ENCODE measurements at regions of chr10 and their contacts with region 1.

Region 1: DNA sequence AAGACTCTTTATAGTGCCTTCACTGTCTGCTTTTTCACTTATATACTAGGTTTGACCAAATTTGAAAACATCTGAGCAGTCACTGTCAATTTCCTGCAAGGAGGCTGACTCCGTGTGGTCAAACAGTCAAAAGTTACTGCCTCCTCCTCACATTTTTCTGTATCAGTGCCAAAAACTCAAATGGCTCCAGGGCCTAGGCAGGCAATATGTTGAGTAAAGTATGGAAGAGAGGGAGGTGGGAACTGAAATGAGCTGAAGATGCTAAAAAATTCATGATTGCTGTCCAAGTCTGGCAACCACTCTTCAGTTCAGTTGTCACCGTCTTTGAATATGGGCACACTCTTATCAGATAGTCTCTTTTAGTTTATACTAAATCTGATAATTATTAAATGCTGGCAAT is 551.6 kb downstream of the CCSER2 start:
- DNase-seq: no peak
- H3K4me3 ChIP-seq: no peak overlapping the region
- H3K27ac ChIP-seq: no peak overlapping the region
- H3K4me1 ChIP-seq: no peaks in the 10 kb centered on the region
- H3K27me3 ChIP-seq: no peaks in the 10 kb centered on the region
- CTCF ChIP-seq: no peak
- POLR2A ChIP-seq: no peak

Region 2: GRCh38 chr10:84743483-84743882 is 136.5 kb before region 1 on chr10:
- intact Hi-C with region 1: no loop called
- DNase-seq: no peak
- H3K4me3 ChIP-seq: no peak overlapping the region
- H3K27ac ChIP-seq: no peak overlapping the region
- H3K4me1 ChIP-seq: no peaks in the 10 kb centered on the region
- H3K27me3 ChIP-seq: no peaks in the 10 kb centered on the region
- CTCF ChIP-seq: no peak
- POLR2A ChIP-seq: no peak

Region 3: GRCh38 chr10:85702768-85703167 is 822.8 kb after region 1 on chr10:
- intact Hi-C with region 1: loop called (anchors 5 kb)
- DNase-seq: no peak
- H3K4me3 ChIP-seq: no peak overlapping the region
- H3K27ac ChIP-seq: no peak overlapping the region
- H3K4me1 ChIP-seq: no peaks in the 10 kb centered on the region
- H3K27me3 ChIP-seq: no peaks in the 10 kb centered on the region
- CTCF ChIP-seq: no peak
- POLR2A ChIP-seq: no peak

Measured in breast epithelium (tissue), 4 donors.